GM18951 (cell line): ENCODE measurements at regions of chr9 and their contacts with region 1.

Region 1: DNA sequence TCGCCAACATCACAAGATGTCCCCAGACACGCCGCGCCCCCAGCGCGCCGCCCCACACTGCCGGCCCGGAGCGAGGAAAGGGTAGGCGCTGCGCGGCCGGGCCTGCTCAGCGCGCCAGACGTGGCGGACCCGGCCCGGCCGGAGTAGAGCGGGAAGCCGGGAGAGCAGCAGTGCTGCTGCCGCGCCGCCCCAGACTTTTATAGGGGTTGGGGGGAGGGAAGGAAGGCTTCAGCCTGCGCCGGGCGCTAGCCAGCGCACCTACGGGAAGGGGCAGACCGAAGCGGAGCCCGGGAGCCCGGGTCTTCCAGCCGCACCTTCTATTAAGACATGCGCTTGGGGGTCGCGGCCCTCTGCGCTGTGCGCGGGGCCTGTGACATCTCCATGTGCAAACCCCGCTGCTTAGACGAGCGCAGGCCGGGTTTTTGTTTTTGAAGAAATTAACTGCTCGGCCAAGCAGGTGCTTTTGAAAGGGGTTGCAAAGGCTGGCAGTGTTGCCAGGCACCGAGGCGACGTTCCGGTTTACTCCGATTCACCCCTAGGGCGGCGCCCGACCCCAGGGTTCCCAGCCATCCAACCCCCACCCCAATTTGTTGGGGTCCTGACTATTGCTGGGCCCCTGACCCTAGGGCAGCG is 353 bp upstream of the PAX5 start:
- POLR2A ChIP-seq: peak; percentile 90

Region 2: DNA sequence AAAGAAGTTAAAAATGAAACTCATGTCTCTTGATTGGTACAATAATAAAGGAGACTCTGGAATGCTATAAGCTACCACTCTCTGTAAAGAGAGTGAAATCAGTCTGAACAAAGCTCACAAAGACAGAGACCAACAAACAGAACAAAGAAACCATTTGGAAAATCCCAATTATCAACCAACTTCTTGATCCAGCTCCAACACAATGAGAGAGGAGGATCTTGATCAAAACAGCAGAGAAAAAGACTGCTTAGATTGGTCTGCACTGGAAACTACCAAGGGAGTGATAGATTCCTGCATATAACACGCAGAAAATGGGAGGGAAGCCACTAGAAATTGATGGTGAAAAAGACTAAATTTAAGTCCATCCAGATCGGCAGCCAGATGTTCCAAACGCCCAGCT is 611.2 kb before region 1 on chr9:
- in situ Hi-C with region 1: no loop called
- POLR2A ChIP-seq: no peak

Region 3: GRCh38 chr9:37302277-37302676 is 267.9 kb after region 1 on chr9:
- in situ Hi-C with region 1: loop called (anchors 5 kb)
- POLR2A ChIP-seq: no peak